Right ventricle myocardium inferior (tissue), 1 donor: ENCODE measurements at regions of chr6 and their contacts with region 1.

Region 1: GRCh38 chr6:110233770-110234374 is 53.6 kb downstream of the CDC40 start:
- DNase-seq: no peak
- ATAC-seq: peak; percentile 52

Region 2: GRCh38 chr6:110013386-110013785 is 220.5 kb before region 1 on chr6:
- intact Hi-C with region 1: loop called (anchors 5 kb)
- DNase-seq: no peak
- ATAC-seq: peak; percentile 37

Region 3: DNA sequence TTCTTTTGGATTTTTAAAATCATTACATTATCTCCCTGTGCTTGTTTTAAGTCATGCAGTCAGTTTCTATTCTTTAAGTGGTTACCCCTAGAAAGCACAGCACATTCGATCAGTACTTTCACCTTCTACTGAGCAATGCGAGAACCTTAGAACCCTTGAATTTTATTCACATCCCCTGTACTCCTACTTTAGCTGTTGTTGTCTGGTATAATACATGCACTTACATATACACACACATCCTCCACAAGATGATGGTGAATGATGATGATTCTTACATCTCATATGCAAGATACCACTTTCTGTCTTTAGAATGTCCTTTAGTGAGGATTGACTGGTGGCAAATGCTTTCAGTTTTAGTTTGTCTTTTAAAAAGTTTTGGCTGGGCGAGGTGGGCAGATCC is 48.0 kb before region 1 on chr6:
- intact Hi-C with region 1: no loop called
- DNase-seq: no peak
- ATAC-seq: no peak